ENCODE measurements at regions of chr10 and their contacts with region 1.

Region 1: GRCh38 chr10:97400665-97401454 is at the start of gene RRP12:
- DNase-seq: peak; percentile 89 to 97 (median 95)
- H3K4me3 ChIP-seq: peak within 1 kb of the TSS; percentile 71
- H3K4me3 Mint-ChIP-seq: peak within 1 kb of the TSS; percentile 95 to 99 (median 96)
- H3K27ac ChIP-seq: peak within 1 kb of the TSS; percentile 88
- H3K27ac Mint-ChIP-seq: peak within 1 kb of the TSS; percentile 94 to 99 (median 99)
- H3K4me1 ChIP-seq: peaks cover 15% of the 10 kb centered on the region
- H3K4me1 Mint-ChIP-seq: peaks cover 11 to 23% (median 15%) of the 10 kb centered on the region in 4 donors
- H3K27me3 ChIP-seq: no peaks in the 10 kb centered on the region
- H3K27me3 Mint-ChIP-seq: no peaks in the 10 kb centered on the region
- total RNA-seq, gene RRP12: 18.2 to 20.0 TPM

Region 2: GRCh38 chr10:97292097-97292862 is 108.6 kb before region 1 on chr10 and contains the start of gene ARHGAP19:
- CTCF ChIA-PET with region 1: interaction called, 4 read pairs
- POLR2A ChIA-PET with region 1: interaction called, 5 read pairs
- intact Hi-C with region 1: loop called (anchors 1 kb)
- DNase-seq: peak; percentile 94 to 98 (median 95)
- H3K4me3 ChIP-seq: peak within 1 kb of the TSS; percentile 76 to 85
- H3K4me3 Mint-ChIP-seq: peak within 1 kb of the TSS; percentile 90 to 99 (median 94)
- H3K27ac ChIP-seq: peak within 1 kb of the TSS; percentile 78
- H3K27ac Mint-ChIP-seq: peak within 1 kb of the TSS; percentile 85 to 97 (median 95)
- H3K4me1 ChIP-seq: peaks cover 11% of the 10 kb centered on the region
- H3K4me1 Mint-ChIP-seq: peaks cover 8 to 25% (median 20%) of the 10 kb centered on the region in 4 donors
- H3K27me3 ChIP-seq: no peaks in the 10 kb centered on the region
- H3K27me3 Mint-ChIP-seq: peaks cover 1 to 3% of the 10 kb centered on the region in 2 donors
- total RNA-seq, gene ARHGAP19: 17.0 to 19.3 TPM

Region 3: DNA sequence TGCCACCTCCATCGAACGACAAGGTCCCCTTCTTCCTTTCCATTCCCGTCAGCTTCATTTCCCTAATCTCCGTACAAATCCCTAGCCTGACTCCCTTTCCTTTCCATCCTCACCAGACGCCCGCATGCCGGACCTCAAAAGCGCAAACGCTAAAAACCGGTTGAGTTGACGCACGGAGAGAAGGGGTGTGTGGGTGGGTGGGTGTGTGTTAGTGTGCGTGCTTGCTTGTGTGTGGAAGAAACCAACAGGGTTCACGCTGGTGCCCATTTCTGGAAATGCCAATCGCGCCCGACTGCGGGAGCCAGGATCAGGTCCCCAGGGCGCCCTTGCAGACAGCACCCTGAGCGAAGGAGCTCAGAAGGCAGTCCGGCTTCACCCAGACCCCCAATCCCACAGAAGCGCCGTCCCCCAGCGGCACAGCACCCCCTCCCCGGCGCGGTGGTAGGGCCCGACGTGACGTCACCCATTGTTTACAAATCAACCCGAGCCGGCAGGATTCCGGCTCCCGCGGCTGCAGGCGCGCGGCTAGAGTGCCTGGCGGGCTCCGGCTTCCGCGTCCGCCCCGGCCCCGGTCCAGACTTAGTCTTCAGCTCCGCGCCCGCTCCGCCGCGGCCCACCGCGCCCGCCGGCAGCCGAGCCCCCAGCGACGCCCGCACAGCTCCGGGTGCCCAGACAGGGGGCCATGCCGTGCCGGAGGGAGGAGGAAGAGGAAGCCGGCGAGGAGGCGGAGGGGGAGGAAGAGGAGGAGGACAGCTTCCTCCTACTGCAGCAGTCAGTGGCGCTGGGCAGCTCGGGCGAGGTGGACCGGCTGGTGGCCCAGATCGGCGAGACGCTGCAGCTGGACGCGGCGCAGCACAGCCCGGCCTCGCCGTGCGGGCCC is 81.8 kb before region 1 on chr10 and contains the start of gene FRAT1:
- CTCF ChIA-PET with region 1: interaction called, 14 read pairs
- POLR2A ChIA-PET with region 1: interaction called, 28 read pairs
- intact Hi-C with region 1: loop called (anchors 2 kb)
- DNase-seq: peak; percentile 90 to 97 (median 94)
- H3K4me3 ChIP-seq: peak within 1 kb of the TSS; percentile 50 to 84
- H3K4me3 Mint-ChIP-seq: peak within 1 kb of the TSS; percentile 93 to 99 (median 96)
- H3K27ac ChIP-seq: peak within 1 kb of the TSS; percentile 99
- H3K27ac Mint-ChIP-seq: peak within 1 kb of the TSS; percentile 96 to 100 (median 99)
- H3K4me1 ChIP-seq: peaks cover 21% of the 10 kb centered on the region
- H3K4me1 Mint-ChIP-seq: peaks cover 16 to 44% (median 31%) of the 10 kb centered on the region in 4 donors
- H3K27me3 ChIP-seq: no peaks in the 10 kb centered on the region
- H3K27me3 Mint-ChIP-seq: peaks cover 0 to 3% of the 10 kb centered on the region in 2 donors
- total RNA-seq, gene FRAT1: 20.2 to 21.8 TPM

Region 4: DNA sequence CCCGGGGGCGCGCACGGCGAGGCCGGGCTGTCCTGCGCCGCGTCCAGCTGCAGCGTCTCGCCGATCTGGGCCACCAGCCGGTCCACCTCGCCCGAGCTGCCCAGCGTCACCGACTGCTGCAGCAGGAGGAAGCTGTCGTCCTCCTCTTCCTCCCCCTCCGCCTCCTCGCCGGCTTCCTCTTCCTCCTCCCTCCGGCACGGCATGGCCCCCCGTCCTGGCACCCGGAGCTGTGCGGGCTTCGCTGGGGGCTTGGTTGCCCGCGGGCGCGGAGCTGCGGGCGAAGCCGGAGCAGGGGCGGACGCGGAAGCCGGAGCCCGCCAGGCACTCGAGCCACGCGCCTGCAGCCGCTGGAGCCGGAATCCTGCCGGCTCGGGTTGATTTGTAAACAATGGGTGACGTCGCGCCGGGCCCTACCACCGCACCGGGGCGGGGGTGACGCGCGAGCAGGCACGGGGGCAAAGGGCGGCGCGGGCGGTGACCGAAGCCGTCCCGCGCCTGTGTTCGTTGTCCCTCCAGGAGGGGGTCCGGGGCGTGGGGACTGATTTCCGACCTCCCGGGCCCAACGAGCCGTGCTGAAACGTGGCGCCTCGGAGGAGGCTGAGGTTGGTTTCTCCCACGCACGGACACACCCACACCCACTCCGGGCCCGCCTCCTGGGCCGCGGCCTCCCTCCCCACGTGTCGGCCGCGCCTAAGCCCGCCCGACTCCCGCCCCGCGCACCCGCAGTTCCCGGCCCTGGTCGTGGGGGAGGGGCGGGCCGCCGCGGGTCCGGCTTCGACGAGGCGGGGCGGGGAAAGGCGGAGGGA is 66.3 kb before region 1 on chr10 and contains the start of gene FRAT2:
- CTCF ChIA-PET with region 1: interaction called, 6 read pairs
- POLR2A ChIA-PET with region 1: interaction called, 19 read pairs
- intact Hi-C with region 1: loop called (anchors 1 kb)
- DNase-seq: peak; percentile 86 to 95 (median 92)
- H3K4me3 ChIP-seq: peak within 1 kb of the TSS; percentile 64 to 67
- H3K4me3 Mint-ChIP-seq: peak within 1 kb of the TSS; percentile 88 to 95 (median 92)
- H3K27ac ChIP-seq: peak within 1 kb of the TSS; percentile 98
- H3K27ac Mint-ChIP-seq: peak within 1 kb of the TSS; percentile 88 to 95 (median 93)
- H3K4me1 ChIP-seq: peaks cover 35% of the 10 kb centered on the region
- H3K4me1 Mint-ChIP-seq: peaks cover 26 to 44% (median 34%) of the 10 kb centered on the region in 4 donors
- H3K27me3 ChIP-seq: no peaks in the 10 kb centered on the region
- H3K27me3 Mint-ChIP-seq: peaks cover 0 to 1% of the 10 kb centered on the region in 2 donors
- total RNA-seq, gene FRAT2: 28.7 to 30.4 TPM

Region 5: GRCh38 chr10:97376413-97376812 is 24.4 kb before region 1 on chr10:
- CTCF ChIA-PET with region 1: no interaction called
- POLR2A ChIA-PET with region 1: no interaction called
- intact Hi-C with region 1: no loop called
- DNase-seq: no peak
- H3K4me3 ChIP-seq: no peak overlapping the region
- H3K4me3 Mint-ChIP-seq: no peak overlapping the region
- H3K27ac ChIP-seq: no peak overlapping the region
- H3K27ac Mint-ChIP-seq: peak overlapping the region in 1 of 7 donors; percentile 64
- H3K4me1 ChIP-seq: no peaks in the 10 kb centered on the region
- H3K4me1 Mint-ChIP-seq: no peaks in the 10 kb centered on the region
- H3K27me3 ChIP-seq: no peaks in the 10 kb centered on the region
- H3K27me3 Mint-ChIP-seq: no peaks in the 10 kb centered on the region

Region 6: GRCh38 chr10:97412891-97413304 is 12.0 kb after region 1 on chr10:
- CTCF ChIA-PET with region 1: interaction called, 75 read pairs
- POLR2A ChIA-PET with region 1: interaction called, 11 read pairs
- intact Hi-C with region 1: no loop called
- DNase-seq: no peak
- H3K4me3 ChIP-seq: no peak overlapping the region
- H3K4me3 Mint-ChIP-seq: peak overlapping the region in 4 of 8 donors; percentile 2 to 60 (median 23)
- H3K27ac ChIP-seq: no peak overlapping the region
- H3K27ac Mint-ChIP-seq: peak overlapping the region; percentile 34 to 91 (median 79)
- H3K4me1 ChIP-seq: peaks cover 38% of the 10 kb centered on the region
- H3K4me1 Mint-ChIP-seq: peaks cover 20 to 43% (median 31%) of the 10 kb centered on the region in 4 donors
- H3K27me3 ChIP-seq: no peaks in the 10 kb centered on the region
- H3K27me3 Mint-ChIP-seq: no peaks in the 10 kb centered on the region

Region 7: DNA sequence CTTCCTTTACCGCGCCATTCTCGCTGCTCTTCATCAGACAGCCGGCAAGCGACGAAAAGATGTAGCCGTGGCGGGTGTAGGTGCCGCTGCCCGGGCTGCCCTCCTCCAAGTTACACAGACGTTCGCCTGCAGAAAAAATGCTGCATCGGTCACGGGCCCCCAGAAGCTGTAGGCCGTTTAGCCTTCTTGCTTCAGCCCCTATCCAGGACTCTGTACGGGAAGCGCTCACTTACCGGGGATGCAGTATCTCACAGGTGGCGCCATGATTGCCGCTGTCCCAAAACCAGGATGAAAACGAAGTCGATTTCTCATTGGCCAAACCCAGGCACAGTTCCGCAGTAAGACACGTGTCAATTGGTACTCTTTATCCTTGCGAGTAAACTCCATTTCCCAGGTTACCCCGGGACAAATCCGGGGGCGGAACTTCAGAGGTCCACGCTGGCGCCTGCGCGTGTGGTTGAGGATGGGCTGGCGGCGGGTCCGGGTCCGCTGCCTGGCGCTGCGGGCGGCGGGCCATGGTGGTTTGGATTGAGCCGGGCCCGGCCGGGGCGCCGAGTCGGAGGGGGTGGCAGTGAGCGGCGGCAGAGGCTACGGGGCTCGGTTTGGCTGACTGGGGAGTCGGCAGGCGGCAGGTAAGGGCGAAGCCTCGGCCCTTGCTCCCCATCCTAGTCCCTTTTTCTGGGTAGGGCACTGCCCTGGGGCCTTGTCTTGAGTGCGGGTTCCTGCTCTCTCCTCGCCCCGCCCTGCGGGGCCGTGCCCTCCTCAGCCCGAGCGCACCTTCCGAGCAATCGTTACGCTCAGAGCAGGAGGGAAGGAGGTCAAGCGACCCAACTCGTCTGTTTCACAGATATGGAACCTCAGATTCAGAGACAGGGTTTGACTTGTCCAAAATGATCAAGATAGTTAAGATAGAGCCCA is 45.1 kb after region 1 on chr10 and contains the starts of genes EXOSC1 and ZDHHC16:
- CTCF ChIA-PET with region 1: interaction called, 6 read pairs
- POLR2A ChIA-PET with region 1: interaction called, 3 read pairs
- intact Hi-C with region 1: loop called (anchors 1 kb)
- DNase-seq: peak; percentile 88 to 95 (median 89)
- H3K4me3 ChIP-seq: peak within 1 kb of the TSS; percentile 79 to 93
- H3K4me3 Mint-ChIP-seq: peak within 1 kb of the TSS; percentile 97 to 100 (median 99)
- H3K27ac ChIP-seq: peak within 1 kb of the TSS; percentile 80
- H3K27ac Mint-ChIP-seq: peak within 1 kb of the TSS; percentile 86 to 97 (median 95)
- H3K4me1 ChIP-seq: peaks cover 40% of the 10 kb centered on the region
- H3K4me1 Mint-ChIP-seq: peaks cover 23 to 59% (median 48%) of the 10 kb centered on the region in 4 donors
- H3K27me3 ChIP-seq: no peaks in the 10 kb centered on the region
- H3K27me3 Mint-ChIP-seq: no peaks in the 10 kb centered on the region
- total RNA-seq, gene EXOSC1: 60.6 to 62.7 TPM
- total RNA-seq, gene ZDHHC16: 29.6 to 29.7 TPM

Region 8: GRCh38 chr10:97623277-97623676 is 222.4 kb after region 1 on chr10:
- CTCF ChIA-PET with region 1: no interaction called
- POLR2A ChIA-PET with region 1: no interaction called
- intact Hi-C with region 1: no loop called
- DNase-seq: no peak
- H3K4me3 ChIP-seq: no peak overlapping the region
- H3K4me3 Mint-ChIP-seq: no peak overlapping the region
- H3K27ac ChIP-seq: no peak overlapping the region
- H3K27ac Mint-ChIP-seq: no peak overlapping the region
- H3K4me1 ChIP-seq: no peaks in the 10 kb centered on the region
- H3K4me1 Mint-ChIP-seq: no peaks in the 10 kb centered on the region
- H3K27me3 ChIP-seq: no peaks in the 10 kb centered on the region
- H3K27me3 Mint-ChIP-seq: no peaks in the 10 kb centered on the region

Region 9: DNA sequence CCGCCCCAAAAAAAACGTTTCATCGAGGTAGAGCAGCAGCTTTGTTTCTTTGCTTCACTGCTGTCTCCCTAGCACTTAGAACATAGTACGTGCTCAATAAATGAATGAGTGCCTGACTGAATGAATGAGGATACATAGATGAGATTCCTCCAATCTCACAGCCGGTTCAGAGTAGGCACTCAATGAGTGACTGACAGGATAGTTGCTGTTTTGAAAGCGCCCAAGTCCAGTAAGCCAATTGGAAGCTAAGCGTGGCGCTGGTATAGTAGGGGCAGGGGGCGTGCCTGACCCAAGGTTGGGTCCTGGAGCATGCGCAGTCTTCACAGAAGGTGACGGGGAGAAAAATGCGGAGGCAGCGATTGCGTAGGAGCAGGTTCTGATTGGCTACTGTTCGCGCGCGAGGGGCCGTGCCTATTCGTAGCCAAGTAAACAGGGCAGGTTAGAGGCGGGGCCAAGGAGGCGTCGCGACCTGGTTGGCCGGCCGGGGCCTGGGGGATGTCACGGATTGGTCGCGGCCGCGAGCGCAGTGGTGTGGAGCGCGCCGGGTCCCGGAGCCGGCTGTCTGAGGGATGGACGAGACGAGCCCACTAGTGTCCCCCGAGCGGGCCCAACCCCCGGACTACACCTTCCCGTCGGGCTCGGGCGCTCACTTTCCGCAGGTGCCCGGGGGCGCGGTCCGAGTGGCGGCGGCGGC is 239.5 kb after region 1 on chr10 and contains the start of gene PI4K2A:
- CTCF ChIA-PET with region 1: no interaction called
- POLR2A ChIA-PET with region 1: interaction called, 4 read pairs
- intact Hi-C with region 1: loop called (anchors 2 kb)
- DNase-seq: peak; percentile 98 to 99 (median 98)
- H3K4me3 ChIP-seq: peak within 1 kb of the TSS; percentile 83 to 97
- H3K4me3 Mint-ChIP-seq: peak within 1 kb of the TSS; percentile 94 to 99 (median 97)
- H3K27ac ChIP-seq: peak within 1 kb of the TSS; percentile 68
- H3K27ac Mint-ChIP-seq: peak within 1 kb of the TSS; percentile 84 to 97 (median 91)
- H3K4me1 ChIP-seq: peaks cover 15% of the 10 kb centered on the region
- H3K4me1 Mint-ChIP-seq: peaks cover 17 to 28% (median 21%) of the 10 kb centered on the region in 4 donors
- H3K27me3 ChIP-seq: no peaks in the 10 kb centered on the region
- H3K27me3 Mint-ChIP-seq: no peaks in the 10 kb centered on the region
- total RNA-seq, gene PI4K2A: 9.8 to 9.9 TPM